Naive thymus-derived CD4-positive, alpha-beta T cell (primary cell): ENCODE measurements at regions of chr14 and their contacts with region 1.

Region 1: DNA sequence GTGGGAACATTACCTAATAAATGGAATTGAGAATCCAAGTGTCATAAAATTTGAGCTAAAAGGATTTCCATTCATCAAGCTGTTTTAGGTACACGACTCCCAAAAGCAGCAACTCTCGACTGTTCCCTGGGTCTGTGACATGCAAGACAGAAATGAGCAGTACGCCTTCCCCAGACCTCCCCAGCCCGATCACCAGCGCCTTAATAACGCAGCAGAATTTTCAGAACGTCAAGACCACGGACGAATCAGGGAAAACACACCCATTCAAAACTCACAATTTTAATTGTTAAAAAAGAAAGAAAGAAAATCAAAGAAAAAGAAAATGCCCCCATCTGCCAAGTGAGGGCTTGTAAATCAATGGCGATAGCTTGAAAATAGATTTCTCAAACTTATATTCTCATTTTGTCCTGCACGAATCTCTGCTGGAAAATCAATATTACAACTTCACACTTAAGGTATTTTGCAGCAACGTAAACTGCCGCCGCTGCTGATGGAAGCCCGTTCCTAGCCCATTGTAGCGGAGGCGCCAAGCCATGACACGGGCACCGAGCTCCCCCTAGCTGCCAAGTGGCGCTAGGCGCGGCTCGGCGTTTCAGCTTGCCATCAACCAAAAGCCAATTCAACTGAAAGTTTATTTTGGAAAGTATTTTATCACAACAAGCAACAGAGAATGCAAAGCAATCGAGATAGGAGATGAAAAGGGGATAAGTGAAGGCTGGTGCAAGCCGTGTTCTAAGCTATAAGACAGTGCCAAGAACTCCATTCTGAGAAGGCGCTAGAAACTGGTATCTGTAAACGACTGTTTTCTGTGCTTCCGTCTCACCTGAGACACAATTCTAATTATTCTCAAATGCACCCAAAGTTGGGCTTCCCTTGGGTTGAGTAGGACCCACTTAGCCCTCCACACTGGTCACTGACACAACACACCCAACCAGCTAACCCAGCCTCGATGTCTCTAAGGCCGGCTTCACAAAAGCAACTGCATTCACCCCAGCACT is 5.5 kb downstream of the BCL11B start:
- DNase-seq: peak; percentile 79 to 93 (median 89)
- ATAC-seq: peak; percentile 56
- H3K4me3 ChIP-seq: peak overlapping the region; percentile 90
- H3K4me3 Mint-ChIP-seq: peak overlapping the region; percentile 92 to 100 (median 94)
- H3K27ac ChIP-seq: peak overlapping the region; percentile 98
- H3K27ac Mint-ChIP-seq: peak overlapping the region; percentile 99 to 100 (median 100)
- H3K4me1 ChIP-seq: peaks cover 16 to 39% of the 10 kb centered on the region in 2 donors
- H3K4me1 Mint-ChIP-seq: peaks cover 43 to 66% (median 54%) of the 10 kb centered on the region in 7 donors
- H3K27me3 ChIP-seq: no peaks in the 10 kb centered on the region
- H3K27me3 Mint-ChIP-seq: peaks cover 0 to 10% (median 0%) of the 10 kb centered on the region in 5 donors

Region 2: GRCh38 chr14:97602438-97603117 is 1663.9 kb before region 1 on chr14:
- CTCF ChIA-PET with region 1: interaction called, 5 read pairs
- POLR2A ChIA-PET with region 1: interaction called, 22 read pairs
- intact Hi-C with region 1: loop called in 1 of 2 experiments (anchors 5 kb)
- DNase-seq: peak; percentile 39 to 92 (median 89)
- ATAC-seq: peak; percentile 94
- H3K4me3 ChIP-seq: peak overlapping the region; percentile 37
- H3K4me3 Mint-ChIP-seq: no peak overlapping the region
- H3K27ac ChIP-seq: peak overlapping the region; percentile 80
- H3K27ac Mint-ChIP-seq: no peak overlapping the region
- H3K4me1 ChIP-seq: peaks cover 57 to 64% of the 10 kb centered on the region in 2 donors
- H3K4me1 Mint-ChIP-seq: peaks cover 0 to 31% (median 4%) of the 10 kb centered on the region in 7 donors
- H3K27me3 ChIP-seq: no peaks in the 10 kb centered on the region
- H3K27me3 Mint-ChIP-seq: no peaks in the 10 kb centered on the region

Region 3: GRCh38 chr14:98198385-98198784 is 1068.1 kb before region 1 on chr14:
- CTCF ChIA-PET with region 1: interaction called, 6 read pairs
- POLR2A ChIA-PET with region 1: interaction called, 323 read pairs
- intact Hi-C with region 1: loop called in 1 of 2 experiments (anchors 1 kb)
- DNase-seq: peak in 4 of 9 donors; percentile 25 to 43 (median 32)
- ATAC-seq: peak; percentile 67
- H3K4me3 ChIP-seq: peak overlapping the region; percentile 18
- H3K4me3 Mint-ChIP-seq: peak overlapping the region; percentile 18 to 84 (median 78)
- H3K27ac ChIP-seq: peak overlapping the region; percentile 33
- H3K27ac Mint-ChIP-seq: peak overlapping the region; percentile 74 to 100 (median 97)
- H3K4me1 ChIP-seq: peaks cover 43 to 80% of the 10 kb centered on the region in 2 donors
- H3K4me1 Mint-ChIP-seq: peaks cover 28 to 95% (median 86%) of the 10 kb centered on the region in 7 donors
- H3K27me3 ChIP-seq: no peaks in the 10 kb centered on the region
- H3K27me3 Mint-ChIP-seq: no peaks in the 10 kb centered on the region

Region 4: GRCh38 chr14:98704441-98704840 is 562.0 kb before region 1 on chr14:
- CTCF ChIA-PET with region 1: no interaction called
- POLR2A ChIA-PET with region 1: no interaction called
- intact Hi-C with region 1: loop called in 1 of 2 experiments (anchors 10 kb)
- DNase-seq: peak in 7 of 9 donors; percentile 26 to 62 (median 53)
- ATAC-seq: peak; percentile 79
- H3K4me3 ChIP-seq: no peak overlapping the region
- H3K4me3 Mint-ChIP-seq: peak overlapping the region; percentile 7 to 75 (median 46)
- H3K27ac ChIP-seq: no peak overlapping the region
- H3K27ac Mint-ChIP-seq: peak overlapping the region in 8 of 9 donors; percentile 1 to 78 (median 53)
- H3K4me1 ChIP-seq: peaks cover 17 to 27% of the 10 kb centered on the region in 2 donors
- H3K4me1 Mint-ChIP-seq: peaks cover 17 to 63% (median 35%) of the 10 kb centered on the region in 7 donors
- H3K27me3 ChIP-seq: no peaks in the 10 kb centered on the region
- H3K27me3 Mint-ChIP-seq: peaks cover 0 to 2% (median 0%) of the 10 kb centered on the region in 5 donors

Region 5: GRCh38 chr14:98853063-98853729 is 413.3 kb before region 1 on chr14:
- CTCF ChIA-PET with region 1: no interaction called
- POLR2A ChIA-PET with region 1: no interaction called
- intact Hi-C with region 1: no loop called
- DNase-seq: no peak
- ATAC-seq: no peak
- H3K4me3 ChIP-seq: no peak overlapping the region
- H3K4me3 Mint-ChIP-seq: no peak overlapping the region
- H3K27ac ChIP-seq: no peak overlapping the region
- H3K27ac Mint-ChIP-seq: peak overlapping the region in 1 of 9 donors; percentile 31
- H3K4me1 ChIP-seq: no peaks in the 10 kb centered on the region
- H3K4me1 Mint-ChIP-seq: peaks cover 0 to 5% (median 0%) of the 10 kb centered on the region in 7 donors
- H3K27me3 ChIP-seq: no peaks in the 10 kb centered on the region
- H3K27me3 Mint-ChIP-seq: peaks cover 0 to 5% (median 0%) of the 10 kb centered on the region in 5 donors

Region 6: DNA sequence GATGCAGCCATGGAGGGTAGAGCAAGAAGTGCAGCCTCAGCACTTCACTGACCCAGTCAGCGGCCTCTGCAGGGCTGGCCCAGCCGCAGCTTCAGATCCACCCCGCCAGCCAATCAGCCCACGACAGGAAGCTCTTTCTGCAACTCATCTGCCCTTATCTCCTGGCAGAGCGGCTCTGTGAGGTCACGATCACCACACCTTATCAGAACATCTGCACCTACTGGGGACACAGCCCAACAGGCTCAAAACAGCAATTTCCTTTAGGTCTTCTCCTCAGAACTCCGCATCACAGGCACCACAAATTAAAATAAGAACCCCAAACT is 281.8 kb before region 1 on chr14:
- CTCF ChIA-PET with region 1: no interaction called
- POLR2A ChIA-PET with region 1: no interaction called
- intact Hi-C with region 1: loop called (anchors 5 to 10 kb)
- DNase-seq: peak; percentile 27 to 76 (median 67)
- ATAC-seq: peak; percentile 96
- H3K4me3 ChIP-seq: peak overlapping the region; percentile 17
- H3K4me3 Mint-ChIP-seq: peak overlapping the region; percentile 51 to 86 (median 78)
- H3K27ac ChIP-seq: peak overlapping the region; percentile 56
- H3K27ac Mint-ChIP-seq: peak overlapping the region; percentile 74 to 97 (median 94)
- H3K4me1 ChIP-seq: peaks cover 29 to 32% of the 10 kb centered on the region in 2 donors
- H3K4me1 Mint-ChIP-seq: peaks cover 27 to 65% (median 48%) of the 10 kb centered on the region in 7 donors
- H3K27me3 ChIP-seq: no peaks in the 10 kb centered on the region
- H3K27me3 Mint-ChIP-seq: no peaks in the 10 kb centered on the region

Region 7: DNA sequence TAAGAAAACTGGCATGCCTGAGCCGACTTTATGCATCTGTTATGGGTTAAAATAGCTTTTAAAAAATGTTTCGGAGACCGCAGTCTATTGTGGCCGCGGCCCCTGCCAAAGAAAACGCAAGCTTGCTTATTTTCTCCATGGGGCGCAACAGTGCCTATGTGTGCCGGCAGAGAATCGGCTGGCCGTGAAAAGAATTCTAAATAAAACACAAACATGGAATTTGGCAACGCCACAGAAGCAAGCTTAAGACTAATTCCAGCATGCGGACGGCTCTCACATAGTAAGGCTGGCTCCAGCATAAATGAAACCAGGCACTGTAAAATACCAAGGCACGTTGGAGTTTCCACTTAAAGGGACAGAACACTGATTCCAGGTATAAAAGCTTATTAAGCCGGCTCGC is 51.2 kb before region 1 on chr14:
- CTCF ChIA-PET with region 1: interaction called, 8 read pairs
- POLR2A ChIA-PET with region 1: interaction called, 1,374 read pairs
- intact Hi-C with region 1: no loop called
- DNase-seq: peak in 1 of 9 donors; percentile 22
- ATAC-seq: no peak
- H3K4me3 ChIP-seq: peak overlapping the region; percentile 40
- H3K4me3 Mint-ChIP-seq: peak overlapping the region; percentile 79 to 94 (median 88)
- H3K27ac ChIP-seq: peak overlapping the region; percentile 64
- H3K27ac Mint-ChIP-seq: peak overlapping the region; percentile 86 to 100 (median 98)
- H3K4me1 ChIP-seq: peaks cover 82 to 94% of the 10 kb centered on the region in 2 donors
- H3K4me1 Mint-ChIP-seq: peaks cover 73 to 100% (median 93%) of the 10 kb centered on the region in 7 donors
- H3K27me3 ChIP-seq: no peaks in the 10 kb centered on the region
- H3K27me3 Mint-ChIP-seq: no peaks in the 10 kb centered on the region

Region 8: DNA sequence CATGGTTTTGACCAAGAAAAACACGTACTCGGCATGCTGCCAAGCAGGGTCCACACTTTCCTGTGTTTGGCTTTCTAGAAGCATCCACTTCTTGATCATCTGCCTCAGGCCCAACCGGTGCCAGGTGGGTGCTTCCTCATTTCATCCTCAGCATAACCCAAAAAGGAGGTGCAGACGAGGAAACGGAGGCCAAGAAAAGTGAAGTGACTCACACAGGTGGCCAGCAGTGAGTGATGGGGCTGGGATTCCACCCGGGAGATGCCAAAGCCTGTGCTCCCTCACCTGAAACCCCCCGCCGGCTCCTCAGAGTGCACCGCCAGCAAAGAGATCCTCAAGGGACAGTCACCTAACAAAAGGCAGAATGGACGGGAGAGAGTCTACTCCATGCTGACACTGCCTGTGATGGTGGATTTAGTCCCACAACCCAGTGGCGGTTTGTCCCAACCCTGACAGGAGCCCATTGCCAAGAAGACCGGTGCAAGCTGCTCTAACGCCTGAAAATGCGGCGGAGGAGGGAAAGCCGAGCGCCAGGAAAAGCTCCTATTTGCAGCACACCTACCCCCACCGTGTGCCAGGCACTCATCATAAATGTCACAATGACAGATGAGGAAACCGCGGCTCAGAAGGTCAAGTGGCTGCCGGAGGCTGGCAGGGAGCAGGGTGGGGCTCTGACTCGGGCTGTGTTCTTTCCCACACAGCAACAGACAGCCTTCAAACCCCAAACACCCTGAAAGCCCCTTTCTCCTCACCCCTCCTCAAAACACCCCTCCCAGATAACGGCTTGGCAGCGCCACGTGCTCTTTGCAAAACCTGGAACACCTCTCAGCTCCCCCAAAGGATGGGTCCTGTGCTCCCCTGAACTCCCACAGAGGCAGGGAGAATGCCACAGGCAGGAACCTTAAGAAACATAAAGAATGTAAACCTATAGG is 13.3 kb before region 1 on chr14:
- CTCF ChIA-PET with region 1: interaction called, 7 read pairs
- POLR2A ChIA-PET with region 1: interaction called, 1,374 read pairs
- intact Hi-C with region 1: loop called in 1 of 2 experiments (anchors 1 kb)
- DNase-seq: peak in 6 of 9 donors; percentile 43 to 75 (median 64)
- ATAC-seq: peak; percentile 72
- H3K4me3 ChIP-seq: peak overlapping the region; percentile 50
- H3K4me3 Mint-ChIP-seq: peak overlapping the region; percentile 82 to 93 (median 88)
- H3K27ac ChIP-seq: peak overlapping the region; percentile 98
- H3K27ac Mint-ChIP-seq: peak overlapping the region; percentile 94 to 100 (median 100)
- H3K4me1 ChIP-seq: peaks cover 98 to 99% of the 10 kb centered on the region in 2 donors
- H3K4me1 Mint-ChIP-seq: peaks cover 59 to 100% (median 94%) of the 10 kb centered on the region in 7 donors
- H3K27me3 ChIP-seq: no peaks in the 10 kb centered on the region
- H3K27me3 Mint-ChIP-seq: no peaks in the 10 kb centered on the region